BJ (cell line): ENCODE measurements at regions of chr1 and their contacts with region 1.

Region 1: GRCh38 chr1:47388891-47389238 is 27.2 kb upstream of the FOXE3 start:
- DNase-seq: no peak
- H3K4me3 ChIP-seq: no peak overlapping the region
- H3K27me3 ChIP-seq: no peaks in the 10 kb centered on the region
- CTCF ChIP-seq: peak; percentile 88

Region 2: DNA sequence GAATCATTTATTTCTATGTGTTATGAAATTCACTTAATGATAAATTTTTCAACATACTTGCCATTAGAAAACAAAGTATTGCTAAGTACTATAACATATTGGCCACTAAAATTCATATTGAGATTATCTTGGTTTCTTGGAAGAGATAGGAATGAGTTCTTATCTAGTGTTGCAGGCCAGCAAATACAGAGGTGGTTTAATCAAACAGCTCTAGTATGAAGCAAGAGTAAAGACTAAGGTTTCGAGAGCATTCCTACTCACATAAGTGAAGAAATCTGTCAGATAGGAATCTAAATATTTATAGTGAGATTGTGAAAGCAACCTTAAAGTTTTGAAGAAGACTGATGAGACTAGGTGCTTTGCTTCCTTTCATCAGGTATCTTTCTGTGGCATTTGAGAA is 10.7 kb before region 1 on chr1:
- CTCF ChIA-PET with region 1: interaction called, 11 read pairs
- POLR2A ChIA-PET with region 1: no interaction called
- DNase-seq: no peak
- H3K4me3 ChIP-seq: no peak overlapping the region
- H3K27me3 ChIP-seq: no peaks in the 10 kb centered on the region
- CTCF ChIP-seq: no peak

Region 3: GRCh38 chr1:47409311-47410070 is 20.6 kb after region 1 on chr1:
- CTCF ChIA-PET with region 1: interaction called, 26 read pairs
- POLR2A ChIA-PET with region 1: no interaction called
- DNase-seq: peak; percentile 71
- H3K4me3 ChIP-seq: no peak overlapping the region
- H3K27me3 ChIP-seq: no peaks in the 10 kb centered on the region
- CTCF ChIP-seq: no peak

Region 4: DNA sequence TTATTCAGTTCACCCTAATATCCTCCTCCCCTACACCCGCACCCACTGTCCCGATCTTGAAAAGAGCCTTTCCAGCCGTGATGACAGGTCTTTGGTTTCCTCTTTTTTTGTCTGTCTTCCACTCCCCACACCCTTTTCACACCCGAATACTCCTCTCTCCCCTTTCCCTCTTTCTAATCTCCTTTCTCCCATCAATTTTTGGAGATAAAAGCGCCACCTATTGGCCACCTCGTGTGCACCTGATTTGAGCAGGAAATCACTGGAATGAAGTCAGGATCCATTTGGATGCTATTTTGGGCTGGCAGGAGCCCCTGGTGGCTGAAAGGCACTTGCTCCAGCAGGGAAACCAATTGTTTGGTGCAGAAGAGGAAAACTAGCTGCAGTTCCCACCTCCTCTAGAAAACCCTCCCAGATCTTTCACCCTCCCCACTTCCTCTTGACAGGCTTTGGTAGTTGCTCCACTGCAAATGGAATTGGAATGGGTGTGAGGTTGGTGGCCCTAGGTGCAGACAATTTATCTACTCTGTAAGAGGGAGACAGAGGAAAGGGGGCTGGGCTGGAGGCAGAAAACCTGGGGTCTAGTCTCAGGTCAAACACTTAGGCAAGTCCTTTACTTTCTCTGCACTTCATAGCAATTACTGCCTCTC is 35.6 kb after region 1 on chr1:
- CTCF ChIA-PET with region 1: interaction called, 169 read pairs
- POLR2A ChIA-PET with region 1: no interaction called
- DNase-seq: no peak
- H3K4me3 ChIP-seq: no peak overlapping the region
- H3K27me3 ChIP-seq: no peaks in the 10 kb centered on the region
- CTCF ChIP-seq: peak; percentile 90

Region 5: GRCh38 chr1:47710329-47711071 is 321.6 kb after region 1 on chr1:
- CTCF ChIA-PET with region 1: interaction called, 29 read pairs
- POLR2A ChIA-PET with region 1: no interaction called
- DNase-seq: no peak
- H3K4me3 ChIP-seq: no peak overlapping the region
- H3K27me3 ChIP-seq: peaks cover 33% of the 10 kb centered on the region
- CTCF ChIP-seq: peak; percentile 96